ENCODE measurements at regions of chr1 and their contacts with region 1.

Region 1: DNA sequence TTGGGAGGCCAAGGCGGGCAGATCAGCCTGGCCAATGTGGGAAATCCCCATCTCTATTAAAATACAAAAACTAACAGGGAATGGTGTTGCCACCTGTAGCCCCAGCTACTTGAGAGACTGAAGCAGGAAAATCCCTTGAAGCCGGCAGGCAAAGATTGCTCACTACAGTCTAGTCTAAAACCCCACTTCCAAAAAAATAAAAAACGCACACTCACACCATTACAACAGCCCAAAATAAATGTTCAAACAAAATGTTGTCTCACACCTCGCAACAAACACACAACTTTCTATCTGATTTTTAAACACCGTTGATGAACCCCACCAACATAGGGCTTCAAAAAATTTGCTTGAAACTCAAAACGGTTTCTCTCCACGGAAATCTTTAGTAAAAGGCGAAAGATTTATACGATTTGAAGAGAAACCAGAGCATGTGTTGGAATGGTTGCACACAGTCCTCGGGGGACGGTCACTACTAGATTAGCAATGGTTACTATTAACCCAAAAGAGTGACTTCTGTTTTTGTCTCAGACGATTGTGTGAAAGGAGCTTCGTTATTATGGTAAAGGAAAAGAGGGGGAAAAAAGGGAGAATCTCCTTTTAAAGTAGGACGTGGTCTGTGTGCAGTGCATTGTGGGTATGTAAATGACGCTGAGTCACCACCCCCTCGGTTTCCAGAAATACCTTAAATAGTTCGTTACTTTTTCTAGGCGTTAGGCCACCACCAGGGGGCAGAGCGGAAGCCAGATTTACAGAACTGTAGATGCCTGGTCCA is at the start of gene RNU5D-1:
- DNase-seq: peak; percentile 94 to 96
- H3K4me3 ChIP-seq: peak within 1 kb of the TSS; percentile 21 to 29
- H3K27ac ChIP-seq: peak within 1 kb of the TSS; percentile 77 to 80
- H3K4me1 ChIP-seq: peaks cover 0 to 29% (median 5%) of the 10 kb centered on the region in 4 donors
- H3K27me3 ChIP-seq: no peaks in the 10 kb centered on the region
- CTCF ChIP-seq: peak; percentile 72 to 78

Region 2: DNA sequence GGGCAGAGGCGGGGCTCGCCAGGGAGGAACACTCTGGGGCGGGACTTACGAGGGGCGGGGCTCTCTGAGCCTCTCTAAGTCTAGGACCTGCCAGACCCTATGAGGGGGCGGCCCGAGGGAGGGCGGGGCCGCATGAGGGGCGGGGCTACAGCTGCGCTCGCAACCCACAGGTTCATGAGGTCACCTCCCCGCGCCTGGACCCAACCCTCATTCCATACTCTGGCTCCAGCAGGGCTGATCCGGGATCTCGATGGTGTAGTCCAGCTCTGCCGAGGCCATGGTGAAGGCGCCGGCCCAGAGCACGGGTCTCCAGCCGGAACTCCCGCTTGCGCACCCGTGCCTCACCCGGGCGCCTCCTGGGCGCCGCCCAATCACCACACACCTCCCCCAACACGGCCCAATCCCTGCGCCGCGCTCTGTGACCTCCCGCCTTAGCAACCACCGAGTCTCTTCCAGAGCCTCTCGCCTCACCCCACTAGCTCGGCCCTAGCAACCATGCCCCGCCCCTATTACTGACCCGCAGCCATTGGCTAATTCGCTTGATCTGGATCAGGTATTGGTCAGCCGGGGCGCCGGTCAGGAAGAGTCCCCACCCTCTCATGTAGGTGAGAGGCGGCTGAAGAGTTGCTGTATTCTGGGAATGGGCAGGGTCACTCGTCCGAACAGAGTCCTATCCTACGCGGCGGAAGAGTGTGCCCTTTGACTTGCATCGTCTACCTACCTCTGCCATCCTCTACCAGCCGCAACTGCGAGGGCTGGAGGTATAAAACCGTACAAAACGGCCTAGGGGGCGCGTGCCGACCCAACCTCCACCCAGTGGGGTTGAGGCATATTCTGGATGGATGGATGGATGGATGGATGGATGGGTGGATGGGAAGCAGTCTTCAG is 56.6 kb before region 1 on chr1 and contains the starts of genes ARMH1 and TMEM53:
- intact Hi-C with region 1: no loop called
- DNase-seq: peak; percentile 99 to 100
- H3K4me3 ChIP-seq: peak within 1 kb of the TSS; percentile 64 to 74
- H3K27ac ChIP-seq: peak within 1 kb of the TSS; percentile 93
- H3K4me1 ChIP-seq: peaks cover 0 to 25% (median 19%) of the 10 kb centered on the region in 4 donors
- H3K27me3 ChIP-seq: peaks cover 0 to 2% of the 10 kb centered on the region in 2 donors
- CTCF ChIP-seq: peak in 1 of 2 experiments; percentile 7

Region 3: DNA sequence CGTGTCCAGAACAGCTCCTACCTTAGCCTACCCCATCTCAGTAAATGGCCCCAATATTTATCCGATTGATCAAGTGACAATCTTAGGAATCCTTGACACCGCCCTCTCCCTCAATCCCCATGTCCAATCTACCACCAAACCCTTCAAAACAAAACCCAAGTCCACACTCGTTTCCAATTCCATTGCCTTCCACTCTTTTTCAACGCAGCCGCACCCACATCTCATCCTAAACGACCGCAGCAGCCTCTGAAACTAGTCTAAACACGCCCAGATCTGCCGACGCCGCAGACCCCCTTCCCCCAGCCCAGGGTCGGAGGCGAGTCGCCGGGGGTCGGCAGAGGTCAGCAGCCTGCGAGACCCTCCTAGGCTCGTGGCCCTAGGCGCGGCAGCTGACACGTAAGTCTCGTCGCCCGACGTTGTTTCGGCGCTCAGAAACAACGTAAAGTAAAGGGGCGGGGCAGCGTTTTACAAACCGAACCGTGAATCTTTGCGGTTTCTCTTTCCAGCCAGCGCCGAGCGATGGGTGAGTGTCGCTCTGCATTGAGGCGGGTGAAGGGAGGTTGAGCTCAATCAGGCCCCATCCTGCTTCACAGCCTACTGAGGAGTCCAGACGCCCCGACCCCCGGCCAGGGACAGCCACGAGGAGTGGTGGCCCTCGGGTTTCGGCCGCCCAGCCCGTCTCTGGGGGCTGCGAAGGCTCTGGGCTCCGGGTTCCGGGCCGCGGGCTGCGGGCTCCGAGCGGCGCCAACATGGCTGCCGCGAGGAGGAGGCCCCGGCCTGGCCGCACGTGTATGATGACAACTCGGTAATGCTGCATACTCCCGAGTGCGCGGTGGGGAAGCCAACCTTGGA is 44.4 kb after region 1 on chr1 and contains the start of gene RPS8:
- intact Hi-C with region 1: loop called (anchors 5 kb)
- DNase-seq: peak; percentile 92 to 95
- H3K4me3 ChIP-seq: peak within 1 kb of the TSS; percentile 82 to 88
- H3K27ac ChIP-seq: peak within 1 kb of the TSS; percentile 96 to 97
- H3K4me1 ChIP-seq: peaks cover 0 to 27% (median 15%) of the 10 kb centered on the region in 4 donors
- H3K27me3 ChIP-seq: no peaks in the 10 kb centered on the region
- CTCF ChIP-seq: no peak

Measured in tibial artery (tissue), 4 donors.